ENCODE measurements at regions of chr12 and their contacts with region 1.

Region 1: DNA sequence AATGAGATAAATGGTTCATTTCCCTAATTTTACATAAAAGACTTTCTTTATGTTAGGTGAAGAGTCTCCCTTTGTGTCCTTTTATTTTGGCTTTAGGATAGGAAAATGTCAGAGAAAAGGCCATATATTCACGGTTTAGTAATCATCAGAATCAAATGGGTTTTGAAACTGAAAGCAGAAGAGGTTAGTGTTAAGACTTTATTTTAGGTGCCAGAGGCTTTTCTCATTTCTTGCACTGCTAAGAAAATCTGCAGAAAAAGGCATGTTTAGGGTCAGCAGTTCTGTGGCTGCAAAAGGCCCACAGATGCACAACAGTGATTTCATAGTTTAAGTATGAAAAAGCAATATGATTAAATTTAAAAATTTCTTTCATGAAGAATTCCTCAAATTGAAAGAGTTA is 80.4 kb upstream of the SINHCAF start:
- DNase-seq: no peak
- ATAC-seq: no peak
- H3K4me3 ChIP-seq: no peak overlapping the region
- H3K27ac ChIP-seq: no peak overlapping the region
- H3K4me1 ChIP-seq: peaks cover 3 to 8% of the 10 kb centered on the region in 2 experiments; a peak in 3 of 4 replicates
- H3K27me3 ChIP-seq: no peaks in the 10 kb centered on the region
- CTCF ChIP-seq: no peak
- POLR2A ChIP-seq: no peak
- RAD21 ChIP-seq: no peak

Region 2: DNA sequence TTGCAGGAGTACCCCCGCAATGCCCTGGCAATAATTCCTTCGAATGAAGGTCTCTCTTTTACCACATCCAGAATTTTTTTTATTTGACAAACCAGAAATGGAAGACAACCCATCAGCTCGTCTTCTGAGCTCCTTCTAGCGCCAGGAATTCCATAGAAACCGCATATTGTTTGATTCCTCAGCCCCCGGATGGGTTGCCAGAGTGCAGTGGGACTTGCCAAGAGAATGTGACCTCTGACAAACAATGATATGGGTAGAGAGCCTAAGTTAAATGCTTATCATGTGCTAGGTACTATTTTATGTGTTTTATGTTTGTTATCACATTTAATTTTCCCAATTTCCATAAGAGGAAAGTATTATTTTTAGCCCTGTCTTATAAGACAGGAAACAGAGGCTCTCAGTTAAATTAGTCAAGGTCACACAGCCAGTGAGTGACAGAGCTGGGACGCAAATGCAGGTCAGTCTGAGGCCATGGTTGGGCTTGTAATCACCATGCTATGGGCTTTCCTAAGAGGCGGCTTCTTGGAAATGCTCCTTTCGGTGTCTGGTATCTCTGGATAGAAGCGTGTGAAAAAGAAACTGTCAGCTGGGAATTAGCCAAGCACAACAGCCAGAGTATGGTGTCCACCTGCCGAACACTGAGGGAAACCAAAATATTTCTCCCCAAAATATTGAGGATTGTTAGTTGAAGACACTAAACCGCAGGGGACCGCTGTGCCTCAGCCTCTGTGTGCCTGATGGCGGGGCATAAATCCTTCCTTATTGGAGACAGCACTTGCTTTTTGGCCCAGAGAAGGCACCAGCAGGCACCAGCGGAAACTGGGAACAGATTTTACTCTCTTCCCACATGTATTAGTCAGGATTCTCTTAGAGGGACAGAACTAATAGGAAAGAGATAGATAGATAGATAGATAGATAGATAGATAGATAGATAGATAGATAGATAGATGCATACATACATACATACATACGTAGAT is 223.7 kb after region 1 on chr12:
- CTCF ChIA-PET with region 1: interaction called, 54 read pairs
- POLR2A ChIA-PET with region 1: no interaction called
- RAD21 ChIA-PET with region 1: interaction called, 5 to 11 read pairs
- intact Hi-C with region 1: no loop called
- DNase-seq: no peak
- ATAC-seq: no peak
- H3K4me3 ChIP-seq: no peak overlapping the region
- H3K27ac ChIP-seq: no peak overlapping the region
- H3K4me1 ChIP-seq: peaks cover 0 to 4% of the 10 kb centered on the region in 2 experiments; a peak in 1 of 4 replicates
- H3K27me3 ChIP-seq: no peaks in the 10 kb centered on the region
- CTCF ChIP-seq: no peak
- POLR2A ChIP-seq: no peak
- RAD21 ChIP-seq: no peak

Region 3: GRCh38 chr12:31644536-31644935 is 238.2 kb after region 1 on chr12:
- CTCF ChIA-PET with region 1: interaction called, 16 read pairs
- POLR2A ChIA-PET with region 1: no interaction called
- RAD21 ChIA-PET with region 1: no interaction called
- intact Hi-C with region 1: no loop called
- DNase-seq: no peak
- ATAC-seq: no peak
- H3K4me3 ChIP-seq: no peak overlapping the region
- H3K27ac ChIP-seq: no peak overlapping the region
- H3K4me1 ChIP-seq: no peaks in the 10 kb centered on the region
- H3K27me3 ChIP-seq: no peaks in the 10 kb centered on the region
- CTCF ChIP-seq: no peak
- POLR2A ChIP-seq: no peak
- RAD21 ChIP-seq: no peak

Region 4: GRCh38 chr12:31650927-31651326 is 244.6 kb after region 1 on chr12:
- CTCF ChIA-PET with region 1: interaction called, 14 read pairs
- POLR2A ChIA-PET with region 1: no interaction called
- RAD21 ChIA-PET with region 1: interaction called, 5 to 6 read pairs
- intact Hi-C with region 1: no loop called
- DNase-seq: no peak
- ATAC-seq: no peak
- H3K4me3 ChIP-seq: no peak overlapping the region
- H3K27ac ChIP-seq: no peak overlapping the region
- H3K4me1 ChIP-seq: peaks cover 0 to 8% of the 10 kb centered on the region in 2 experiments; a peak in 2 of 4 replicates
- H3K27me3 ChIP-seq: no peaks in the 10 kb centered on the region
- CTCF ChIP-seq: no peak
- POLR2A ChIP-seq: no peak
- RAD21 ChIP-seq: no peak

Region 5: GRCh38 chr12:31984806-31985591 is 578.7 kb after region 1 on chr12:
- CTCF ChIA-PET with region 1: no interaction called
- POLR2A ChIA-PET with region 1: no interaction called
- RAD21 ChIA-PET with region 1: no interaction called
- intact Hi-C with region 1: no loop called
- DNase-seq: no peak
- ATAC-seq: no peak
- H3K4me3 ChIP-seq: no peak overlapping the region
- H3K27ac ChIP-seq: no peak overlapping the region
- H3K4me1 ChIP-seq: no peaks in the 10 kb centered on the region
- H3K27me3 ChIP-seq: no peaks in the 10 kb centered on the region
- CTCF ChIP-seq: no peak
- POLR2A ChIP-seq: no peak
- RAD21 ChIP-seq: no peak

Region 6: DNA sequence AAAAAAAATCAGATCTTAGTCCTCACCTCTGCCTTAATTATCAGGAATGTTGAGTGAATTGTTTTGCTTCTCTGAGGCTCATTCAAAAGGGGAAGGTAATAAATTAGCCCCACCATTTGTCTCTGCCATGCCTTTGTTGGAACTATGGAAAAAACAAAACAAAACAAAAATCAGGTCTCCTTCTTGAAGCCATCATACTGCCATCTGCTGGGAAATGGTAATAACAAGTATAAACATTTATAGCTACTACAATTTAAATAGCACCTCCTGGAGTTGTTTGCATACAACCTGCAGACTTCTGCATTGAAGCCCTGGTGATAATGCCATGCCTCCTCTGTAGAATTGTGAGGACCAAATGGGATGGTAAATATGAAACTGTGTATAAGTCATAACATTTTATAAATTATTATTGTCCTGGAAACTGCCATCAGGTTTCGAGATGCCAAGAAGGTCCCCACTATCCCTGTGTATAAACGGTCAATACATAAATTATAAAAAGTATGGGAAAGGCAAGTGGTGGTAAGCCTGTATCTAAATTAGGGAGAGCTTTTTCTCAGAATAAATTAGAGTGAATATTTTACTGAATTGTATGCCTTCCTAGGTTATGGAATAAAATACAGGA is 905.8 kb after region 1 on chr12:
- CTCF ChIA-PET with region 1: no interaction called
- POLR2A ChIA-PET with region 1: no interaction called
- RAD21 ChIA-PET with region 1: no interaction called
- intact Hi-C with region 1: loop called (anchors 5 kb)
- DNase-seq: peak; percentile 55
- ATAC-seq: peak; percentile 86
- H3K4me3 ChIP-seq: no peak overlapping the region
- H3K27ac ChIP-seq: no peak overlapping the region
- H3K4me1 ChIP-seq: no peaks in the 10 kb centered on the region
- H3K27me3 ChIP-seq: no peaks in the 10 kb centered on the region
- CTCF ChIP-seq: peak; percentile 48 to 96 (median 66)
- POLR2A ChIP-seq: no peak
- RAD21 ChIP-seq: peak; percentile 63